Aorta (tissue), 5 donors: ENCODE measurements at regions of chr13 and their contacts with region 1.

Region 1: DNA sequence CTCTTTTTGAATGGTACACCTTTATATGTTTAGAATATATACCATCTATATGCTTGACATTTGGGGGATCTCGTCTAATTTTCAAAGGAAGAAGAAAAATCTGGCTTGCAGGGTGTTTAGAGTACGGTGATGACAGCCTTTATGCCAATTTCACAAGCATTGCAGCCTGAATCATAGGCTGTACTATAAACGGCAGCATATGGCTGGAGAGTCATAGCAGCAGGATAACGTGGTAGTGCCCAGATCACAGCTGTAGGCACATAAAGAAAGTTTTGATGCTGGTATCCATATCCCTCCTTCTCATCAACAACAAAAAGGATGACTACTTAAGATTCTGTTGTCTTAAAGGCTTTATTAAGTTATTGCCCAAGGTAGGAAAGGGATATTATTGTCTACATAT is 253.0 kb downstream of the PCDH9 start:
- DNase-seq: no peak
- ATAC-seq: no peak
- H3K4me3 ChIP-seq: no peak overlapping the region
- H3K27ac ChIP-seq: no peak overlapping the region
- H3K4me1 ChIP-seq: no peaks in the 10 kb centered on the region
- H3K27me3 ChIP-seq: no peaks in the 10 kb centered on the region

Region 2: GRCh38 chr13:67150608-67151007 is 173.4 kb after region 1 on chr13:
- intact Hi-C with region 1: loop called in 1 of 2 experiments (anchors 5 kb)
- DNase-seq: no peak
- ATAC-seq: no peak
- H3K4me3 ChIP-seq: no peak overlapping the region
- H3K27ac ChIP-seq: no peak overlapping the region
- H3K4me1 ChIP-seq: peaks cover 0 to 3% of the 10 kb centered on the region in 2 donors
- H3K27me3 ChIP-seq: no peaks in the 10 kb centered on the region

Region 3: DNA sequence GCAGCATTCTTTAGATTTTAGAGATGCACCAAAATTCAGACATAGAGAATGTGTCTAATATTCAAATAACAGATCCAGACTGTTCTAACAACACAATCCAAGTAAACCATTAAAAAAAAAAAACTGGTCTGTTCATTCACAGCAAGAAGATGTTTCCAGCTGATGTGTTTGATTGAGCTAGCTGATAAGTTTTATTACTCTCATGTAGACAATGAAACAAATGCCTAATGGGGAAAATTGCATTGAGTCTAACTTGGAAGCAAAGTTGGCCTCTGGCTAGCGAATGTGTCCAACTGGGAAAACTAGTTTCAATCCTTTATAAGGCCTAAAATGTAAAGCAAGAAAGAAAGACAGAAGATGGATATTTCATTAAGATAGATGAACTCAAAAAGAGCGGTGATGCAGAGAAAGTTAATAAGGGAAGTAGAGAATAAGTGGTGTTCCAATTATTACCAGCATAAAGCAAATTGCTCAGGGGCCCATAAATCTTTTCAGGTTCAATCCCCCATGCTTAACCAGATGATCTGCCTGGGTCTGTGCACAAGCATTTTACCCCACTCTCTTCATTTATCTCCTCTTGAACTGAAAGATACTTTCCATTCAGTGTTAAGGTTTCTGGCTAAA is 198.8 kb after region 1 on chr13:
- intact Hi-C with region 1: no loop called
- DNase-seq: no peak
- ATAC-seq: no peak
- H3K4me3 ChIP-seq: no peak overlapping the region
- H3K27ac ChIP-seq: no peak overlapping the region
- H3K4me1 ChIP-seq: no peaks in the 10 kb centered on the region
- H3K27me3 ChIP-seq: no peaks in the 10 kb centered on the region